GM12878 (cell line): ENCODE measurements at regions of chr2 and their contacts with region 1.

Region 1: DNA sequence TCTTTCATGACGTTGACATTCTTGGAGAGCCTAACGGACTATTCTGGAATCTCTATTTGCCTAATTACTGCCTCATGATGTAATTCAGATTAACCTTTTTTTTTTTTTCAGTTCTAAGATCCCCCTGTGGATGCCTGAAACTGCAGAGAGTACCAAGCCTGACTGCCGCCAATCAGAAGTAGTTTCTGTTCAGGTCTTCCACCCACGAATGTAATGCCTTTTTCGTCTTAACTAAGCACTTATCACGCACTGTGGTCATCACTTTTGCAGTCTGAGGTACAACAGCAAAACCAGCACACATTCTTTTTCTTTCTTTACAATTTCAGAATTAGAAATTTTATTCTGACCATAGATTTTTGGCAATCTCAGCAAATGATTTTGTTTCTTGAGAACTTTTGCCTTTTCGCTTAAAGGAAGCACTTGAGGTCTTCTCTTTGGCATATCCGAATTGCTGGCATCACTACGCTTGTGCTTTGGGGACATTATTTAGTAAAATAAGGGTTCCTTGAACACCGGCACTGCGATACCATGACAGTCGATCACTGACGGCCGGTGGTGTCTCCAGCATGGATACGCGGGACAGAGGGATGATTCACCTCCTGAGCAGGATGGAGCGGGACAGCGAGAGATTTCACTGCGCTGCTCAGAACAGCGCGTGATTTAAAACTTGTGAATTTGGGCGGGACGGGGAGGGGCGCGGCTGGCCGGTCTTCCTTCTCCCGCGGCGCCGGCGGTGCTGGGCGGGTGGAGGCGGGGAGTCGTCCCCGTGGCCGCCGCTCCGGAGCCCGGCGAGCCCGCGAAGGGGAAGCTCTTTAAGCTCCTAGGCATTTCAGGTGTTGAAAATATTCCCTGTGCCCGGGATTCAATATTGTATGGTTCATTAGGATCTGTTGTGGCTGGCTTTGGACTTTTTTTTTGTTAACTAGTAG is 32.0 kb upstream of the GPR55 start:
- DNase-seq: peak; percentile 91
- ATAC-seq: peak; percentile 79
- H3K4me3 ChIP-seq: peak overlapping the region; percentile 72
- H3K27ac ChIP-seq: peak overlapping the region; percentile 99
- H3K4me1 ChIP-seq: peaks cover 54% of the 10 kb centered on the region
- H3K27me3 ChIP-seq: no peaks in the 10 kb centered on the region
- CTCF ChIP-seq: no peak
- EP300 ChIP-seq: peak; percentile 84 to 92; a peak in 2 of 4 replicates
- POLR2A ChIP-seq: peak; percentile 87
- RAD21 ChIP-seq: peak; percentile 37; the same call in 1 of the 2 replicates

Region 2: GRCh38 chr2:230842473-230842872 is 114.6 kb before region 1 on chr2:
- CTCF ChIA-PET with region 1: no interaction called
- POLR2A ChIA-PET with region 1: no interaction called
- RAD21 ChIA-PET with region 1: no interaction called
- SMC1A ChIA-PET with region 1: no interaction called
- in situ Hi-C with region 1: no loop called
- intact Hi-C with region 1: no loop called
- DNase-seq: no peak
- ATAC-seq: no peak
- H3K4me3 ChIP-seq: no peak overlapping the region
- H3K27ac ChIP-seq: no peak overlapping the region
- H3K4me1 ChIP-seq: peaks cover under 1% of the 10 kb centered on the region; the same call in 1 of the 2 replicates
- H3K27me3 ChIP-seq: peaks cover 0 to 3% of the 10 kb centered on the region in 2 experiments; a peak in 1 of 4 replicates
- CTCF ChIP-seq: no peak
- EP300 ChIP-seq: no peak
- POLR2A ChIP-seq: no peak
- RAD21 ChIP-seq: no peak

Region 3: DNA sequence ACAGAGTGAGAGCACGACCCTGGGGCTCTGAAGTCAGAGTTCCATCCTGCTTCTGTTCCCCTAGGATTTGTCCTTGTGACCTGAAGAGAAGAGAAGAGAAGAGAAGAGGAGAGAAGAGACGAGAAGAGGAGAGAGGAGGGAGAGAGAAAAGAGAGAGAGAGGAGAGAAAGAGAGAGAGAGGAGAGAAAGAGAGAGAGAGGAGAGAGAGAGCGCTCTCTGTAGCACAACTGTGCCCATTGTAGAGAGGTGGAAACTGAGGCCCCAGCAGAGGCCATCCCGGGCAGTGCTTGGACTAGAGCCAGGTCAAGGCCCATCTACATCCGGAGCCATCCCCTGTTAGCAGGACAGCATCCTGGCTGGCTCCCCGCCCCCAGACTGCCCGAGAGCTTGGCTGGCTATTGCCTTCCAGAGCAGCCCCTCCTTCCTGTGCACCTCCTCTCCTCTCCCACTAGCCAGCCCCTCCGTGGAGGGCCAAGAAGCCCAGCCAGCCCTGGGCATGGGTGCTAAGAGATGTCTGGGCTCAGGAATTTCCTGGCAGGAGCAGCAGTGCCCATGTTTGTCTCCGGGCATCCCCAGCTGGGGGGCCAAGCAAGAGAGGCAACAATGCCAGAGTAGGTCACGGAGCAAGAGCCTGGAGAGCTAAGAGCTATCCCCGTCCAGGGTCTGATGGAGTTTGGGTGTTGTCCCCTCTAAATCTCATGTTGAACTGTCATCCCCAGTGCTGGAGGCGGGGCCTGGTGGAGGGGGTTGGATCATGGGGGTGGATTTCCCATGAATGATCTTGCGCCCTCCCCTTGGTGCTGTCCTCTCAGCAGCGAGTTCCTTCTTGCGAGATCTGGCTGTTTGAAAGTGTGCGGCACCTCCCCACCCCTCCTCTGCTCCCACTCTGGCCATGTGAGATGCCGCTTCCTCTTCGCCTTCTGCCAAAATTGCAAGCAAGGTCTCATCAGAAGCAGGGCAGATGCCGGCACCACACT is 13.9 kb before region 1 on chr2:
- CTCF ChIA-PET with region 1: interaction called, 5 read pairs
- POLR2A ChIA-PET with region 1: interaction called, 12 read pairs
- RAD21 ChIA-PET with region 1: interaction called, 16 read pairs
- SMC1A ChIA-PET with region 1: interaction called, 266 read pairs
- in situ Hi-C with region 1: no loop called
- intact Hi-C with region 1: no loop called
- DNase-seq: peak; percentile 82
- ATAC-seq: peak; percentile 79
- H3K4me3 ChIP-seq: peak overlapping the region; percentile 85
- H3K27ac ChIP-seq: peak overlapping the region; percentile 99
- H3K4me1 ChIP-seq: peaks cover 27% of the 10 kb centered on the region
- H3K27me3 ChIP-seq: no peaks in the 10 kb centered on the region
- CTCF ChIP-seq: no peak
- EP300 ChIP-seq: no peak
- POLR2A ChIP-seq: peak; percentile 78
- RAD21 ChIP-seq: no peak

Region 4: GRCh38 chr2:231050018-231050901 is 93.2 kb after region 1 on chr2:
- CTCF ChIA-PET with region 1: no interaction called
- POLR2A ChIA-PET with region 1: no interaction called
- RAD21 ChIA-PET with region 1: no interaction called
- SMC1A ChIA-PET with region 1: no interaction called
- in situ Hi-C with region 1: no loop called
- intact Hi-C with region 1: no loop called
- DNase-seq: no peak
- ATAC-seq: no peak
- H3K4me3 ChIP-seq: no peak overlapping the region
- H3K27ac ChIP-seq: no peak overlapping the region
- H3K4me1 ChIP-seq: peaks cover 8% of the 10 kb centered on the region; the same call in 1 of the 2 replicates
- H3K27me3 ChIP-seq: peaks cover 0 to 2% of the 10 kb centered on the region in 2 experiments; a peak in 2 of 4 replicates
- CTCF ChIP-seq: no peak
- EP300 ChIP-seq: no peak
- POLR2A ChIP-seq: no peak
- RAD21 ChIP-seq: no peak

Region 5: DNA sequence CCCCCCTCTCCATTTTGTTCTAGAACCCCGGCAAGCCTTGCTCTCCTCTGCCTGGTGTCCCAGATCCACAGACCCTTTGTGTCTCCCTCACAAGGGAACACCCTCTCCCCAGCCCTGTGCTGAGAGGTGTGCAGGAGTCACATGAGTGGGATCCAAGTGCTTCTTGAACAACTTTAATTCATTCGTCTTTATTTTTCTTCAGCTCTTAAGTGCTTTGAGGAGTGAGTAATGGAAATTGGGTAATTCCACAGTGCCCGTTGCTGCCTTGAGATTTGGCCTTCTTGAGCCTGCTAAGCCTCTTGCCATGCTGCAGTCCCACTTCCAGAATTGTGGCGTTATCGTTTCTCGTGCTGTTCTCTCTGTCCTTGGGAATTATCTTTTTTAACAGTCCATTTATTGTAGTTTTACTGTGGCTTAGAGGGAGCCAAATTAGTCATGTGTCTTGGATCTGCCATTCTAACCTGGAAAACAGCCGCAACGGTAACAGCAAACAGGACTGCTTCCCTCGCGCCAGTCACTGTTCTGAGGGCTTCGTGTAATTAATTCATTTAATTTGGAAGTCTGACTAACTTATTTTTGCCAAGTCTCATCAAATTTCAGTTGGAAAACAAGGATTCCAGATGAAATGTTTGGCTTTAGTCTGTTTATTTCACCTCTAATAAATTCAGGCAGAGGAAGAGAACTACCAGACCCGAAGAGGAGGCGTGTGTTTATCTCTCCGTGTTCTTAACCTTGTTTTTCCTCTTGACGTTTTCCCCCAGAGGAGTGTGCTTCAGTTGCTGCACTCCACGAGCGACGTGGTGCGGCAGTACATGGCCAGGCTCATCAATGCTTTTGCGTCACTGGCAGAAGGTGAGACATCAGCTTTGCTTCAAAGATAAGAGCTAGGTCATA is 313.4 kb after region 1 on chr2:
- CTCF ChIA-PET with region 1: no interaction called
- POLR2A ChIA-PET with region 1: no interaction called
- RAD21 ChIA-PET with region 1: no interaction called
- SMC1A ChIA-PET with region 1: no interaction called
- in situ Hi-C with region 1: no loop called
- intact Hi-C with region 1: no loop called
- DNase-seq: no peak
- ATAC-seq: no peak
- H3K4me3 ChIP-seq: no peak overlapping the region
- H3K27ac ChIP-seq: no peak overlapping the region
- H3K4me1 ChIP-seq: no peaks in the 10 kb centered on the region
- H3K27me3 ChIP-seq: no peaks in the 10 kb centered on the region
- CTCF ChIP-seq: no peak
- EP300 ChIP-seq: no peak
- POLR2A ChIP-seq: no peak
- RAD21 ChIP-seq: no peak

Region 6: GRCh38 chr2:231280846-231281245 is 323.8 kb after region 1 on chr2:
- CTCF ChIA-PET with region 1: no interaction called
- POLR2A ChIA-PET with region 1: no interaction called
- RAD21 ChIA-PET with region 1: no interaction called
- SMC1A ChIA-PET with region 1: no interaction called
- in situ Hi-C with region 1: no loop called
- intact Hi-C with region 1: no loop called
- DNase-seq: no peak
- ATAC-seq: peak; percentile 63
- H3K4me3 ChIP-seq: no peak overlapping the region
- H3K27ac ChIP-seq: no peak overlapping the region
- H3K4me1 ChIP-seq: peaks cover 3% of the 10 kb centered on the region
- H3K27me3 ChIP-seq: no peaks in the 10 kb centered on the region
- CTCF ChIP-seq: no peak
- EP300 ChIP-seq: no peak
- POLR2A ChIP-seq: no peak
- RAD21 ChIP-seq: no peak